WTC11 (cell line): ENCODE measurements at regions of chr4 and their contacts with region 1.

Region 1: GRCh38 chr4:1567803-1568581 is 116.1 kb downstream of the FAM53A start:
- DNase-seq: peak; percentile 35
- ATAC-seq: no peak
- H3K4me3 Mint-ChIP-seq: no peak overlapping the region
- H3K27ac Mint-ChIP-seq: no peak overlapping the region
- H3K4me1 Mint-ChIP-seq: peaks cover 29% of the 10 kb centered on the region
- H3K27me3 Mint-ChIP-seq: peaks cover 3% of the 10 kb centered on the region
- CTCF ChIP-seq: no peak

Region 2: GRCh38 chr4:1579901-1580691 is 12.1 kb after region 1 on chr4:
- CTCF ChIA-PET with region 1: interaction called, 15 read pairs
- POLR2A ChIA-PET with region 1: interaction called, 3 read pairs
- DNase-seq: peak; percentile 99
- ATAC-seq: peak; percentile 88
- H3K4me3 Mint-ChIP-seq: peak overlapping the region; percentile 64
- H3K27ac Mint-ChIP-seq: no peak overlapping the region
- H3K4me1 Mint-ChIP-seq: peaks cover 22% of the 10 kb centered on the region
- H3K27me3 Mint-ChIP-seq: peaks cover 4% of the 10 kb centered on the region; the same call in 1 of the 2 replicates
- CTCF ChIP-seq: no peak

Region 3: DNA sequence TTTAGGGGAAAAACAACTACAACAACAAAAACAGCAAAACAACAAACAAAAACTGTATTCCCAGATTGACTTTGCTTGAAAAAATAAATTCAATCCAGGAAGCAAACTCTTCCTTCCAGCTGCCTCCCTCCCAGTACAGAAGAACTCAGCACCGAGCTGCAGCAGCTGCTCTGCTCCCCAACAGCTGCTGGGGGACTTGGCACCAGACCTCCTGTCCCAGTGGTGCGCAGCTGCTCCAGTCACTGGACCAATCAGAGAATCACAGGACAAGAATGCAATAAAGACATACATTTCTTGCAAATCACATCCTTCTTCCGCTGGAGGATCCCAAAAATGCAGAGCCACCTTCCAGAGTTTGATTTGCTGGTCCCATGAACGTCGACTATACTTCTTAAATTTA is 127.9 kb after region 1 on chr4:
- CTCF ChIA-PET with region 1: no interaction called
- POLR2A ChIA-PET with region 1: no interaction called
- DNase-seq: no peak
- ATAC-seq: no peak
- H3K4me3 Mint-ChIP-seq: no peak overlapping the region
- H3K27ac Mint-ChIP-seq: 0 out of 2 replicates have a peak overlapping the region, but pooled peaks have one; percentile 32
- H3K4me1 Mint-ChIP-seq: no peaks in the 10 kb centered on the region
- H3K27me3 Mint-ChIP-seq: no peaks in the 10 kb centered on the region
- CTCF ChIP-seq: no peak